Activated CD4-positive, alpha-beta T cell treated with anti-CD3 and anti-CD28 coated beads for 36 hours (primary cell): ENCODE measurements at regions of chr17 and their contacts with region 1.

Region 1: GRCh38 chr17:60421273-60421934 is 885 bp upstream of the CHCT1 start:
- DNase-seq: peak; percentile 89
- ATAC-seq: peak; percentile 99
- H3K4me3 Mint-ChIP-seq: peak overlapping the region; percentile 61
- H3K27ac Mint-ChIP-seq: no peak overlapping the region
- H3K4me1 Mint-ChIP-seq: peaks cover 9% of the 10 kb centered on the region
- H3K27me3 Mint-ChIP-seq: no peaks in the 10 kb centered on the region

Region 2: GRCh38 chr17:60142872-60143499 is 278.4 kb before region 1 on chr17:
- CTCF ChIA-PET with region 1: interaction called, 3 read pairs
- POLR2A ChIA-PET with region 1: no interaction called
- intact Hi-C with region 1: loop called in 1 of 2 experiments (anchors 5 kb)
- DNase-seq: peak; percentile 92
- ATAC-seq: peak; percentile 80
- H3K4me3 Mint-ChIP-seq: no peak overlapping the region
- H3K27ac Mint-ChIP-seq: no peak overlapping the region
- H3K4me1 Mint-ChIP-seq: peaks cover 18% of the 10 kb centered on the region
- H3K27me3 Mint-ChIP-seq: peaks cover 75% of the 10 kb centered on the region

Region 3: GRCh38 chr17:60269417-60269816 is 152.0 kb before region 1 on chr17:
- CTCF ChIA-PET with region 1: no interaction called
- POLR2A ChIA-PET with region 1: no interaction called
- intact Hi-C with region 1: no loop called
- DNase-seq: no peak
- ATAC-seq: no peak
- H3K4me3 Mint-ChIP-seq: no peak overlapping the region
- H3K27ac Mint-ChIP-seq: no peak overlapping the region
- H3K4me1 Mint-ChIP-seq: no peaks in the 10 kb centered on the region
- H3K27me3 Mint-ChIP-seq: no peaks in the 10 kb centered on the region

Region 4: GRCh38 chr17:60345227-60345626 is 76.2 kb before region 1 on chr17:
- CTCF ChIA-PET with region 1: no interaction called
- POLR2A ChIA-PET with region 1: no interaction called
- intact Hi-C with region 1: no loop called
- DNase-seq: no peak
- ATAC-seq: no peak
- H3K4me3 Mint-ChIP-seq: no peak overlapping the region
- H3K27ac Mint-ChIP-seq: no peak overlapping the region
- H3K4me1 Mint-ChIP-seq: peaks cover 7% of the 10 kb centered on the region
- H3K27me3 Mint-ChIP-seq: no peaks in the 10 kb centered on the region

Region 5: GRCh38 chr17:60435244-60436167 is 14.1 kb after region 1 on chr17:
- CTCF ChIA-PET with region 1: interaction called, 6 read pairs
- POLR2A ChIA-PET with region 1: no interaction called
- intact Hi-C with region 1: loop called in 1 of 2 experiments (anchors 1 kb)
- DNase-seq: peak; percentile 71
- ATAC-seq: peak; percentile 74
- H3K4me3 Mint-ChIP-seq: no peak overlapping the region
- H3K27ac Mint-ChIP-seq: no peak overlapping the region
- H3K4me1 Mint-ChIP-seq: no peaks in the 10 kb centered on the region
- H3K27me3 Mint-ChIP-seq: peaks cover 2% of the 10 kb centered on the region

Region 6: DNA sequence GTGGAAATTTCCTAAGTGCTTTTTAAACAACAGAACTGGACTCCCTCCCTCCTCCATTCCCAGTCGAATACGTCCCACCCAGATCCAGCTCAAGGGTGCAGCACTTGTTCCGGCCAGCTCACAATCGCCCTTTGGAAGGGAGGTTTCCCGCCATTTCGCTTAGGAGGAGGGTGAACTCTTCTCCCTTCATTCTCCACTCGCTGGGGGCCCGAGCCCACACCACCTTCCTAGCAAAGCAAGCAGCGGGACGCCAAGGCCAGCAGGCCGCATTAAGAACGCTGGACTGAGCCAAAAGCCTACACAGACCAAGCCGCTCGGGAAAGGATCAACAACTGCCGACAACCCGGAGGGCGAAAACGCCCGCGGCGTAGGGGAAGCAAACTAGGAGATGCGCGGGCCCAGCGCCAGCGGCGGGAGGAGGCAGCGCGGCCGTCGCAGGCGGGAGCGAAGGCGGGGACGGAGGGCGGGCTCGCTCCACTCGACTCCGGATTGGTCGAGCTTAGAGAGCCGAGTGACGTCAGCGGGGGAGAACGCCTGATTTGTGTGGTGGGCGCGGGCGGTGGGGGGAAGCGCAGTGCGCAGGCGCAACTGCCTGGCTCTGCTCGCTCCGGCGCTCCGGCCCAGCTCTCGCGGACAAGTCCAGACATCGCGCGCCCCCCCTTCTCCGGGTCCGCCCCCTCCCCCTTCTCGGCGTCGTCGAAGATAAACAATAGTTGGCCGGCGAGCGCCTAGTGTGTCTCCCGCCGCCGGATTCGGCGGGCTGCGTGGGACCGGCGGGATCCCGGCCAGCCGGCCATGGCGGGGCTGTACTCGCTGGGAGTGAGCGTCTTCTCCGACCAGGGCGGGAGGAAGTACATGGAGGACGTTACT is 178.5 kb after region 1 on chr17 and contains the start of gene PPM1D:
- CTCF ChIA-PET with region 1: interaction called, 4 read pairs
- POLR2A ChIA-PET with region 1: no interaction called
- intact Hi-C with region 1: loop called in 1 of 2 experiments (anchors 1 kb)
- DNase-seq: peak; percentile 99
- ATAC-seq: peak; percentile 94
- H3K4me3 Mint-ChIP-seq: peak within 1 kb of the TSS; percentile 95
- H3K27ac Mint-ChIP-seq: peak within 1 kb of the TSS; percentile 97
- H3K4me1 Mint-ChIP-seq: peaks cover 31% of the 10 kb centered on the region
- H3K27me3 Mint-ChIP-seq: no peaks in the 10 kb centered on the region
- total RNA-seq, gene PPM1D: 9.3 to 9.7 TPM

Region 7: GRCh38 chr17:60677308-60678124 is 256.1 kb after region 1 on chr17 and contains the start of gene BCAS3:
- CTCF ChIA-PET with region 1: no interaction called
- POLR2A ChIA-PET with region 1: no interaction called
- intact Hi-C with region 1: loop called in 1 of 2 experiments (anchors 1 kb)
- DNase-seq: peak; percentile 98
- ATAC-seq: peak; percentile 97
- H3K4me3 Mint-ChIP-seq: peak within 1 kb of the TSS; percentile 95
- H3K27ac Mint-ChIP-seq: peak within 1 kb of the TSS; percentile 84
- H3K4me1 Mint-ChIP-seq: peaks cover 16% of the 10 kb centered on the region
- H3K27me3 Mint-ChIP-seq: no peaks in the 10 kb centered on the region
- total RNA-seq, gene BCAS3: 7.2 to 7.5 TPM